ENCODE measurements at regions of chrX and their contacts with region 1.

Region 1: DNA sequence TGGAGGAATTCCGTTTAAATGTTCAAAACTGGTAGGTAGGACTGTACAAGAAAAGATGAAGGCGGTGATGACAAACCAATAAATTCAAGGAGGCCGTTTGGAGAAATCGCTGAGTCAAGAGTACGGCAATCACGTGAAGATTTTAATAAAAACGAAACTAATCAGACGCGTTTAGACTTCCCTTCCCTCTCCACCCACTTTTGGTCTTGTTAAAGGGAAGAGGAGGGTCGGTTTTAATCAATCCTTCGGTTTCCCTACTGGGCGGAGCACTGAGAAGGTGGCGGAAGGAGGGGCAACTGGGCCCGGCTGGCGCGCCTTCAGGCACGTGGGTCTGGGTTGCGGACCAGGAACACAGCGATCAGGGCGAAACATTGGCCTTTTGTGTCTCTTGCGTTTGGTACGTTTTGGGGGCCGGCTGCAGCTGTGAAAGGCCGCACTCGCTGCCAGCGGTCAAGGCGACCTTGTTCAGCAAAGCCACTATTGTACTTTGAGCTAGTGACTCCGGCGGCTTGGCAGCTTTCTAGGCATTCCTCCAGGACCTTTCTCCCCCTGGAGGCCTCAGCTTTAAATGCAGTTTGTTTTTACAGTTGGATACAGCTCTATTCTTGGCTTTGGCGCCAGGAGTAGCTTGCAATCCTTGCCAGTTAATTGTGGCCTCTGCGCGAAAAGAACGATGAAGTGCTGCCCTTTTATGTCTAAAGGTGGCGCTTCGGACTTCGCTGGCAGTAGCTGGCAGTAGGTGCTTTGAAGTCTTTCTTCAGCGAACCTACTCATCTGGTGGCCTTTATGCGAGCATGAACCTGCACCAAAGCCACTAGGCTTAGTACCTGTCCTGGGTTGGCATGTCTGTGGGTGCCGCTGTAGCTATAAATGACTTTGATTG is 16.8 kb upstream of the LAMP2 start:
- DNase-seq: peak in 8 of 9 experiments; percentile 8 to 77 (median 44)
- ATAC-seq: peak; percentile 76
- H3K4me3 ChIP-seq: peak overlapping the region; percentile 71 to 75
- H3K4me3 Mint-ChIP-seq: peak overlapping the region; percentile 92
- H3K27ac ChIP-seq: peak overlapping the region; percentile 68 to 89
- H3K27ac Mint-ChIP-seq: peak overlapping the region; percentile 94
- H3K4me1 ChIP-seq: peaks cover 25% of the 10 kb centered on the region
- H3K4me1 Mint-ChIP-seq: peaks cover 26% of the 10 kb centered on the region
- H3K27me3 ChIP-seq: no peaks in the 10 kb centered on the region
- H3K27me3 Mint-ChIP-seq: no peaks in the 10 kb centered on the region
- CTCF ChIP-seq: peak; percentile 50

Region 2: GRCh38 chrX:120250522-120251271 is 235.2 kb before region 1 on chrX and contains the start of gene ZBTB33:
- CTCF ChIA-PET with region 1: interaction called, 3 read pairs
- POLR2A ChIA-PET with region 1: interaction called, 4 read pairs
- intact Hi-C with region 1: loop called in 1 of 2 experiments (anchors 5 kb)
- DNase-seq: peak; percentile 68 to 94 (median 79)
- ATAC-seq: peak; percentile 99
- H3K4me3 ChIP-seq: peak within 1 kb of the TSS; percentile 58 to 68
- H3K4me3 Mint-ChIP-seq: peak within 1 kb of the TSS; percentile 92
- H3K27ac ChIP-seq: peak within 1 kb of the TSS; percentile 82 to 91
- H3K27ac Mint-ChIP-seq: peak within 1 kb of the TSS; percentile 98
- H3K4me1 ChIP-seq: no peaks in the 10 kb centered on the region
- H3K4me1 Mint-ChIP-seq: peaks cover 37% of the 10 kb centered on the region
- H3K27me3 ChIP-seq: no peaks in the 10 kb centered on the region
- H3K27me3 Mint-ChIP-seq: peaks cover 2% of the 10 kb centered on the region
- CTCF ChIP-seq: peak; percentile 52
- total RNA-seq, gene ZBTB33: 26.4 to 30.7 TPM

Region 3: GRCh38 chrX:120499301-120500072 is 13.6 kb after region 1 on chrX:
- CTCF ChIA-PET with region 1: interaction called, 4 read pairs
- POLR2A ChIA-PET with region 1: no interaction called
- intact Hi-C with region 1: loop called in 1 of 2 experiments (anchors 1 kb)
- DNase-seq: no peak
- ATAC-seq: no peak
- H3K4me3 ChIP-seq: no peak overlapping the region
- H3K4me3 Mint-ChIP-seq: no peak overlapping the region
- H3K27ac ChIP-seq: no peak overlapping the region
- H3K27ac Mint-ChIP-seq: no peak overlapping the region
- H3K4me1 ChIP-seq: no peaks in the 10 kb centered on the region
- H3K4me1 Mint-ChIP-seq: peaks cover 5% of the 10 kb centered on the region
- H3K27me3 ChIP-seq: no peaks in the 10 kb centered on the region
- H3K27me3 Mint-ChIP-seq: no peaks in the 10 kb centered on the region
- CTCF ChIP-seq: no peak

Region 4: DNA sequence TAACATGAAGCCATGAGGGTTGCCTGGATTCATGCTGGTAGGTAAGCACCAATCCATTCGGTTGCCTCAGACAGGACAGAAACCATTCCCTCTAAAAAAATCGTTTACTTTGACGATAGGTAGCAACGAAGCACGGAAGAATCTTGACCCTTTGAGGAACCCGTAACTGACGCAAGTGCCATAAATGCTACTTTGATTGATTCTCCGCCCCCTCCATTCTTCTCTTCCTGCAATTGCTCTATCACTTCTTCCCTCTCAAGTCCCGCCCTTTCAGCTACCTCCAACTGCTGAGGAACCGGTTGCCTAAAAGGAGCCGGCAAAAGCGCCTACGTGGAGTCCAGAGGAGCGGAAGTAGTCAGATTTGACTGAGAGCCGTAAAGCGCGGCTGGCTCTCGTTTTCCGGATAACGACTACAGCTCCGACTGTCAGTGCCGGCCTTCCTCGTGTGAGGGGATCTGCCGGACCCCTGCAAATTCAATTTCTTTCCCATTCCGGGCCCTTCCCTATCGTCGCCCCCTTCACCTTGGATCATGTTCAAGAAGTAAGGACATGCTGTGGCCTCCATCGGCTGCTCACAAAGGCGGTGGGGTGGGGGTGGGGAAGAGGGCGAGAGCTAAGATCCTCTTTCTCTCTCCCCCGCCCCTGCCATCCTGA is 118.0 kb after region 1 on chrX and contains the start of gene MCTS1:
- CTCF ChIA-PET with region 1: no interaction called
- POLR2A ChIA-PET with region 1: interaction called, 4 read pairs
- intact Hi-C with region 1: loop called in 1 of 2 experiments (anchors 1 kb)
- DNase-seq: peak; percentile 52 to 93 (median 71)
- ATAC-seq: peak; percentile 87
- H3K4me3 ChIP-seq: peak within 1 kb of the TSS; percentile 76 to 91
- H3K4me3 Mint-ChIP-seq: peak within 1 kb of the TSS; percentile 95
- H3K27ac ChIP-seq: peak within 1 kb of the TSS; percentile 87 to 92
- H3K27ac Mint-ChIP-seq: peak within 1 kb of the TSS; percentile 97
- H3K4me1 ChIP-seq: peaks cover 15% of the 10 kb centered on the region
- H3K4me1 Mint-ChIP-seq: peaks cover 15% of the 10 kb centered on the region
- H3K27me3 ChIP-seq: no peaks in the 10 kb centered on the region
- H3K27me3 Mint-ChIP-seq: no peaks in the 10 kb centered on the region
- CTCF ChIP-seq: no peak
- total RNA-seq, gene MCTS1: 7.0 to 9.2 TPM

Measured in CD8-positive, alpha-beta T cell (primary cell).